CD4-positive, alpha-beta memory T cell (primary cell): ENCODE measurements at regions of chr13 and their contacts with region 1.

Region 1: GRCh38 chr13:110715395-110716235 is 2.1 kb downstream of the ING1 start:
- DNase-seq: peak; percentile 97 to 100 (median 99)
- H3K4me3 ChIP-seq: peak overlapping the region; percentile 91 to 98
- H3K4me3 Mint-ChIP-seq: peak overlapping the region; percentile 96 to 100 (median 98)
- H3K27ac ChIP-seq: peak overlapping the region; percentile 78
- H3K27ac Mint-ChIP-seq: peak overlapping the region; percentile 98 to 99 (median 99)
- H3K4me1 ChIP-seq: peaks cover 33% of the 10 kb centered on the region
- H3K4me1 Mint-ChIP-seq: peaks cover 18 to 56% (median 33%) of the 10 kb centered on the region in 4 donors
- H3K27me3 ChIP-seq: no peaks in the 10 kb centered on the region
- H3K27me3 Mint-ChIP-seq: peaks cover 0 to 2% of the 10 kb centered on the region in 2 donors

Region 2: DNA sequence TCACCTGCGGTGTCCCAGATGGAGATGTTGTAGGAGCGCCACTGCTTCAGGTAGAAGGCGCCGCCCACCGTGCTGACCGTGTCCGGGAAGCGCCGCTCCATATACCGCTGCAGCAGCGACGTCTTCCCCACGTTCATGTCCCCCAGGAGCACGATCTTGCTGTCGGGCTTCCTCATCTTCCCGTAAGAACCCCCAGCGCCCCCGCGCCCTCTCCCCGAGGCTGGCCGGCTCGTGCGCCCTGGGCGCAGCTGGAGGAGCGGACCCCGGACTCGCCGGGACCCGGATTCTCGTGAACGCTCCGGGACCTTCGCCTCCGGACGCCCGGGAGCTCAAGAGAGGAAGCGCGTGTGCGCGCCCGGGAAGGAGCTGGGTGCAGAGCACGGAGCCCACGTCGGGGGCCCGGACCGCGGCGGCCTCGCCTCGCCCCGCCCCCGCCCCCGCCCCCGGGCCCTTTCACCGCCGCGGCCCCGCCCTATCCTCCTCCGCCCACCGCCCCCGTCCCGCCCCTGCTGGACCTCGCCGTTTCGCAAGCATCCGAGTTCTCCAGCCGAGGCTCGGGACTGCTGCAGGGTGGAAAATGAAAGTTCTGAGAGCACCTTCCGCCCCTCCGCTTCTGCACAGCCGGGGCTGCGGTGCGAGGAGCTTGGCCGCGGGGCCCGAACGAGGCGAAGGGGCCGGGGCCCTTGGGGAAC is 154.1 kb before region 1 on chr13 and contains the start of gene RAB20:
- CTCF ChIA-PET with region 1: no interaction called
- POLR2A ChIA-PET with region 1: interaction called, 7 read pairs
- intact Hi-C with region 1: loop called (anchors 2 kb)
- DNase-seq: peak; percentile 28 to 63 (median 41)
- H3K4me3 ChIP-seq: peak within 1 kb of the TSS; percentile 61 to 68
- H3K4me3 Mint-ChIP-seq: peak within 1 kb of the TSS; percentile 93 to 100 (median 97)
- H3K27ac ChIP-seq: peak within 1 kb of the TSS; percentile 41
- H3K27ac Mint-ChIP-seq: peak within 1 kb of the TSS; percentile 76 to 94 (median 89)
- H3K4me1 ChIP-seq: peaks cover 17% of the 10 kb centered on the region
- H3K4me1 Mint-ChIP-seq: peaks cover 11 to 41% (median 23%) of the 10 kb centered on the region in 4 donors
- H3K27me3 ChIP-seq: no peaks in the 10 kb centered on the region
- H3K27me3 Mint-ChIP-seq: peaks cover 0 to 2% of the 10 kb centered on the region in 2 donors
- total RNA-seq, gene RAB20: 2.2 to 3.2 TPM

Region 3: DNA sequence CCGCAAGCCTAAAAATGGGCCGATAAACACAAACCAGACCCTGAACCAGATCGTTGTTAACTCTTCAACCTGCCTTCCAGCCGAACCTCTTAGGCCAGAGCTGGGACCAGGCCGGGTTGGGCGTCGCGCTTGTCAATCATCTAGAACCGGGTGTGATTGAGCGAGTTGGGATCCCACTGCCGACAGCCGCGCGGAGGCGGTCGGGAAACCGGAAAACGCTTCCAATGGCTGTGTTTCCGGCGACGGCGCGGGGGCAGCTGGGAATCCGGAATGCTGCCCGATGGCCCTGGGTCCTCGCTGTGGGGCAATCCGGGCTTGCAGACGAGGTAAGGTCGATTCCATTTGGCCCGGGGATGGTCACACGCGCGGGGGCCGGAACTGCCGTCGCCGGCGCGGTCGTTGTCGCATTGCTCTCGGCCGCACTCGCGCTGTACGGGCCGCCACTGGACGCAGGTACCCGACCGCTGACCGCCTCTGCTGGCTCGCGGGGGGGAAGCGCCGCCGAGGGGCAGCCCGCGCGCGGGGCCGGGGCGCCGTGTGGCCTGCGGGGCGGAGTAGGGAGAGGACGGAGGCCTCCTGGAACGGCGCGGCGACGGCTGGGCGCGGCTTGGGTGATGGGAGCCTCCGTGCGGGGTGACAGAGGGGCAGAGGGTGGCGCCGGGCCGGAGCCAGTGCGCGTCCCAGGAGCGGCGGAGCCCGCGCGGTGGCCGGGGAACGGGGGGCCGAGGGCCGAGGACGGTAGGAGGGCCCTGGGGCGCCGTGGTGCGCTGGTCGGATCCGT is 100.1 kb before region 1 on chr13 and contains the start of gene NAXD:
- CTCF ChIA-PET with region 1: no interaction called
- POLR2A ChIA-PET with region 1: interaction called, 28 read pairs
- intact Hi-C with region 1: loop called (anchors 1 kb)
- DNase-seq: peak; percentile 71 to 75 (median 73)
- H3K4me3 ChIP-seq: peak within 1 kb of the TSS; percentile 53 to 67
- H3K4me3 Mint-ChIP-seq: peak within 1 kb of the TSS; percentile 88 to 96 (median 94)
- H3K27ac ChIP-seq: peak within 1 kb of the TSS; percentile 47
- H3K27ac Mint-ChIP-seq: peak within 1 kb of the TSS; percentile 71 to 98 (median 93)
- H3K4me1 ChIP-seq: peaks cover 17% of the 10 kb centered on the region
- H3K4me1 Mint-ChIP-seq: peaks cover 28 to 47% (median 40%) of the 10 kb centered on the region in 4 donors
- H3K27me3 ChIP-seq: no peaks in the 10 kb centered on the region
- H3K27me3 Mint-ChIP-seq: no peaks in the 10 kb centered on the region
- total RNA-seq, gene NAXD: 32.6 to 33.4 TPM

Region 4: DNA sequence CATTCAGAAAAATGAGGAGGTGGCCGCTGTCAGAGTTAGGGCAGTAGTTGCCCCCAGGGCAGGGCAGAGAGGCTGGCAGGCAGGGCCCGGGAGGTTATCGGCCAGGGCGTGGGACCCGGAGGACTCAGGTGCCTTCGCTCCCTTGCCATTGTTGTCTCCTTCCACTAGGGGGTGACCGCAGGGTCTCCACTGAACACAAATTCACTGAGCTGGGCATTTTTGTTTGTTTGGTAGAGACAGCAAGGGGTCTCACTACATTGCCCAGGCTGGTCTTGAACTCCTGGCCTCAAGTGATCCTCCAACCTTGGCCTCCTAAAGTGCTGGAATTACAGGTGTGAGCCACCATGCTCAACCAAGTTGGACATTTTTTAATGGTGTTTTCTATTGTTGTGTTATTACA is 34.8 kb before region 1 on chr13:
- CTCF ChIA-PET with region 1: interaction called, 4 read pairs
- POLR2A ChIA-PET with region 1: interaction called, 20 read pairs
- intact Hi-C with region 1: loop called (anchors 1 kb)
- DNase-seq: peak in 4 of 5 donors; percentile 12 to 22 (median 20)
- H3K4me3 ChIP-seq: no peak overlapping the region
- H3K4me3 Mint-ChIP-seq: no peak overlapping the region
- H3K27ac ChIP-seq: no peak overlapping the region
- H3K27ac Mint-ChIP-seq: no peak overlapping the region
- H3K4me1 ChIP-seq: no peaks in the 10 kb centered on the region
- H3K4me1 Mint-ChIP-seq: peaks cover 6 to 21% (median 11%) of the 10 kb centered on the region in 4 donors
- H3K27me3 ChIP-seq: no peaks in the 10 kb centered on the region
- H3K27me3 Mint-ChIP-seq: no peaks in the 10 kb centered on the region

Region 5: DNA sequence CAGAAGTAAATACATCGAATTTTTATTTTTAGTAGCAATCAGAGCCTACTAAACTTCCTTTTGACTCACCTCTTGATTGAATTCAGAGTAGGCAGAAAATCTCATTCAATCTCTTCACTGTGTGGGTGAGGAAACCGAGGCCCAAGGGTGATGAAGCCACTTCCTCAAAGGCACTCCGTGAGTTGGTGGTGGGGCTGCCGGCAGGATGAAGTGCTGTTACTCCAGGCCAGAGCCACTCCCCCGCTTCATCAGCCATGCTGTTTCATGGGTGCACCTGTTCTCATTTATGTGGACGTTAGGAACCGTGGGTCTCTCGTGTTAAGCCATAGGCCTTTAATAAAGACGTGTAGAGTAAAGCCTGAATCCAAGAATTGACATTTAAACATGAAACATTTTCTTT is 11.1 kb after region 1 on chr13:
- CTCF ChIA-PET with region 1: no interaction called
- POLR2A ChIA-PET with region 1: interaction called, 8 read pairs
- intact Hi-C with region 1: loop called (anchors 1 kb)
- DNase-seq: peak; percentile 45 to 61 (median 54)
- H3K4me3 ChIP-seq: no peak overlapping the region
- H3K4me3 Mint-ChIP-seq: peak overlapping the region; percentile 46 to 81 (median 71)
- H3K27ac ChIP-seq: peak overlapping the region; percentile 27
- H3K27ac Mint-ChIP-seq: peak overlapping the region; percentile 78 to 95 (median 86)
- H3K4me1 ChIP-seq: peaks cover 17% of the 10 kb centered on the region
- H3K4me1 Mint-ChIP-seq: peaks cover 13 to 29% (median 15%) of the 10 kb centered on the region in 4 donors
- H3K27me3 ChIP-seq: no peaks in the 10 kb centered on the region
- H3K27me3 Mint-ChIP-seq: no peaks in the 10 kb centered on the region

Region 6: GRCh38 chr13:110841846-110842245 is 126.2 kb after region 1 on chr13:
- CTCF ChIA-PET with region 1: no interaction called
- POLR2A ChIA-PET with region 1: no interaction called
- intact Hi-C with region 1: no loop called
- DNase-seq: no peak
- H3K4me3 ChIP-seq: no peak overlapping the region
- H3K4me3 Mint-ChIP-seq: no peak overlapping the region
- H3K27ac ChIP-seq: no peak overlapping the region
- H3K27ac Mint-ChIP-seq: no peak overlapping the region
- H3K4me1 ChIP-seq: no peaks in the 10 kb centered on the region
- H3K4me1 Mint-ChIP-seq: no peaks in the 10 kb centered on the region
- H3K27me3 ChIP-seq: peaks cover 7% of the 10 kb centered on the region
- H3K27me3 Mint-ChIP-seq: peaks cover 28 to 35% of the 10 kb centered on the region in 2 donors

Region 7: DNA sequence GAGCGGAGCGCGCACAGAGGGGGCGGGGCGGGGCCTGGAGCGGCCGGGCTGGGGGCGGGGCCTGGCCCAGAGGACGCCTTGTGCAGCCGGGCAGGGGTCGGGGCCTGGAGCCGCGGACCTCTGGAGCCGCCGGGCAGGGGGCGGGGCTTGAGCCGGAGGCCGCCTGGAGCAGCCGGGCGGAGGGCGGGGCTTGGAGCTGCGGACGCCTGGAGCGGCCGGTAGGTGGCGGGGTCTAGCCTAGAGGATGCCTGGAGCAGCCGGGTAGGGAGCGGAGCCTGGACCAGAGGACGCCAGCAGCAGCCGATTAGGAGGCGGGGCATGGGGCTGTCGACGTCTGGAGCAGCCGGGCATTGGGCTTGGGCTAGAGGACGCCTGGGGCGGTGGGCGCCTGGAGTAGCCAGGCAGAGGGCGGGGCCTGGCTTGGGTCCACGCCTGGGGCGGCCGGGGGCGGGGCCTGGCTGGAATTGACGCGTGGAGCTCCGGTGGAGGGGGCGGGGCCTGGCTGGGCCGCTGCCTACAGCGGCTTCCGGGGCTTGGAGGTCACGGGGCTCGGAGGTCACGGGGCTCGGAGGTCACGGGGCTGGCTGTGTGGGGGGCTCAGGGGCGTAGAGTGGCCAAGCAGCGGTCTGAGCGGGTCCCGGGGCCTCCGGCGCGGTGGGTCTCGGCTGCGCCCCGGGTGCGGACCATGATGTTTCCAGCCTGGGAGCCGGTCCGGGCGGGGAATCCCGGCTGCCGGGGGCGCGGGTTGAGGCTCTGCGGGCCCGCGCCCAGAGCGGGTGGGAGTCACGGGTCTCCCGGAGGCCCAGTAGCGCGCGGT is 199.7 kb after region 1 on chr13 and contains the start of gene ANKRD10:
- CTCF ChIA-PET with region 1: interaction called, 5 read pairs
- POLR2A ChIA-PET with region 1: interaction called, 48 read pairs
- intact Hi-C with region 1: loop called (anchors 1 kb)
- DNase-seq: peak; percentile 90 to 94 (median 91)
- H3K4me3 ChIP-seq: peak within 1 kb of the TSS; percentile 26 to 89
- H3K4me3 Mint-ChIP-seq: peak within 1 kb of the TSS; percentile 89 to 95 (median 92)
- H3K27ac ChIP-seq: peak within 1 kb of the TSS; percentile 77
- H3K27ac Mint-ChIP-seq: peak within 1 kb of the TSS; percentile 90 to 96 (median 95)
- H3K4me1 ChIP-seq: peaks cover 39% of the 10 kb centered on the region
- H3K4me1 Mint-ChIP-seq: peaks cover 20 to 52% (median 37%) of the 10 kb centered on the region in 4 donors
- H3K27me3 ChIP-seq: no peaks in the 10 kb centered on the region
- H3K27me3 Mint-ChIP-seq: no peaks in the 10 kb centered on the region
- total RNA-seq, gene ANKRD10: 127 to 140 TPM

Region 8: GRCh38 chr13:111153279-111153976 is 437.8 kb after region 1 on chr13:
- CTCF ChIA-PET with region 1: no interaction called
- POLR2A ChIA-PET with region 1: no interaction called
- intact Hi-C with region 1: loop called (anchors 1 kb)
- DNase-seq: peak; percentile 89 to 92 (median 91)
- H3K4me3 ChIP-seq: peak overlapping the region; percentile 55 to 87
- H3K4me3 Mint-ChIP-seq: peak overlapping the region; percentile 92 to 99 (median 95)
- H3K27ac ChIP-seq: peak overlapping the region; percentile 67
- H3K27ac Mint-ChIP-seq: peak overlapping the region; percentile 85 to 98 (median 93)
- H3K4me1 ChIP-seq: peaks cover 23% of the 10 kb centered on the region
- H3K4me1 Mint-ChIP-seq: peaks cover 13 to 39% (median 27%) of the 10 kb centered on the region in 4 donors
- H3K27me3 ChIP-seq: no peaks in the 10 kb centered on the region
- H3K27me3 Mint-ChIP-seq: no peaks in the 10 kb centered on the region